ENCODE measurements at regions of chr16 and their contacts with region 1.

Region 1: GRCh38 chr16:10743610-10744393 is at the start of gene NUBP1:
- DNase-seq: peak; percentile 98 to 99
- ATAC-seq: peak; percentile 94 to 99 (median 95)
- H3K4me3 ChIP-seq: peak within 1 kb of the TSS; percentile 78
- H3K4me3 Mint-ChIP-seq: peak within 1 kb of the TSS; percentile 82
- H3K27ac ChIP-seq: peak within 1 kb of the TSS; percentile 99
- H3K27ac Mint-ChIP-seq: peak within 1 kb of the TSS; percentile 97 to 98
- H3K4me1 ChIP-seq: peaks cover 26% of the 10 kb centered on the region
- H3K4me1 Mint-ChIP-seq: peaks cover 16 to 36% of the 10 kb centered on the region in 2 donors
- H3K27me3 ChIP-seq: no peaks in the 10 kb centered on the region
- H3K27me3 Mint-ChIP-seq: no peaks in the 10 kb centered on the region
- CTCF ChIP-seq: no peak
- total RNA-seq, gene NUBP1: 19.3 to 25.6 (median 20.5) TPM

Region 2: DNA sequence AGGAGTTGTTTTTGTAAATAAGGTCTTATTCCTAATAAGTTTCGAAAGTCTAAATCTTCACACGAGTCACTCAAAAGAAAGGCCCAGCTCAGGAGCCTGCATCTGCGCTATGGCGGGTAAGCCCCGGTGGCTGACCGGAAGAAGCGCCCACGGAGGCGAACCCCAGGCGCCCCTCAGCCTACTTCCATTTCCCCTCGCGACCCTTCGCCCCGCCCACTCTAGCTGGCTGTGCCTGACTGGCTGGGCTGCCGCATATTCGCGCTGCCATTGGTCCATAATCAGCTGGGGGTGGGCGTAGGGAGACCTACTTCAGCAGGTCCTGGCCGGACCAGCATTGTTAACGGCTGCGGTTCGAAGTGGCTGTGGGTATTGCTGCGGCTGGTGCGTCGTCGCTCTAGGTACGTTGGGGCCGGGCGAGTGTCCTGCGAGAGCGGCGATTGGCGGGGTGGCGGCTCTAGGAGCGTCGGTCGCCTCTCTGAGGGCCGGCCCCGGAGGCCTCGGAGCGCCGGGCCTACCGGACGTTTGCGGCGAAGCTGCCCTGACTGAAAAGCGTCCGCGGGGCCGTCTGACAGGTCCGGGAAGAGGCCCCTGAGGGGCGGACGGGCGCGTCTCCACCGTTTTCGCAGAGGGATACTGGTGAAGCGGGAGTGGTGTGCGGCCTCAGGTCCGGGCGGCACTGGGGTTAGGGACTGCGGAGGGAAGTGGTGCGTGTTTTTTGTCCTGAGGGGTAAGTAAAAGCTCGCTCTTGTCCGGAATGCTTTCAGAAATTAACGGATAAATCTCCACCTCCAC is 357.9 kb before region 1 on chr16 and contains the start of gene ATF7IP2:
- intact Hi-C with region 1: loop called (anchors 5 kb)
- DNase-seq: peak; percentile 79 to 91
- ATAC-seq: peak; percentile 94 to 97 (median 95)
- H3K4me3 ChIP-seq: peak within 1 kb of the TSS; percentile 77
- H3K4me3 Mint-ChIP-seq: peak within 1 kb of the TSS; percentile 98
- H3K27ac ChIP-seq: peak within 1 kb of the TSS; percentile 68
- H3K27ac Mint-ChIP-seq: peak within 1 kb of the TSS; percentile 86 to 98
- H3K4me1 ChIP-seq: peaks cover 5% of the 10 kb centered on the region
- H3K4me1 Mint-ChIP-seq: peaks cover 49 to 50% of the 10 kb centered on the region in 2 donors
- H3K27me3 ChIP-seq: no peaks in the 10 kb centered on the region
- H3K27me3 Mint-ChIP-seq: no peaks in the 10 kb centered on the region
- CTCF ChIP-seq: no peak
- total RNA-seq, gene ATF7IP2: 41.7 to 53.5 (median 43.8) TPM

Region 3: GRCh38 chr16:10609402-10609774 is 134.4 kb before region 1 on chr16:
- intact Hi-C with region 1: no loop called
- DNase-seq: no peak
- ATAC-seq: no peak
- H3K4me3 ChIP-seq: no peak overlapping the region
- H3K4me3 Mint-ChIP-seq: no peak overlapping the region
- H3K27ac ChIP-seq: no peak overlapping the region
- H3K27ac Mint-ChIP-seq: no peak overlapping the region
- H3K4me1 ChIP-seq: no peaks in the 10 kb centered on the region
- H3K4me1 Mint-ChIP-seq: no peaks in the 10 kb centered on the region
- H3K27me3 ChIP-seq: no peaks in the 10 kb centered on the region
- H3K27me3 Mint-ChIP-seq: peaks cover 14 to 15% of the 10 kb centered on the region in 2 donors
- CTCF ChIP-seq: no peak

Region 4: DNA sequence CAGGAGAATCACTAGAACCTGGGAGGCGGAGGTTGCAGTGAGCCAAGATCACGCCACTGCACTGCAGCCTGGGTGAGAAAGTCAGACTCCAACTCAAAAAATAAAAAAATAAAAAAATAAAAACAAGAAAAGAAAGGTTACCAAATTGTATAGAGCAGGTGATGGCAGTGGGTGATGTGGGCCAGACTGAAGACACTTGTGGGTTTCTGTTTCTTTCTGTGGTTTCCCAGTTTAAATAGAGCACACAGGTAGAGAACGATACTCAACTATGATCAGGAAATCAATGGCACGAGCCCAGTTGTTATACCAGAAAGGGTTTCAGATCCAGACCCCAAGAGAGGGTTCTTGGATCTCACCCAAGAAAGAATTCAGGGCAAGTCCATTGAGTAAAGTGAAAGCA is 32.5 kb after region 1 on chr16:
- intact Hi-C with region 1: no loop called
- DNase-seq: peak in 1 of 2 donors; percentile 54
- ATAC-seq: peak in 2 of 3 donors; percentile 41 to 65
- H3K4me3 ChIP-seq: no peak overlapping the region
- H3K4me3 Mint-ChIP-seq: no peak overlapping the region
- H3K27ac ChIP-seq: no peak overlapping the region
- H3K27ac Mint-ChIP-seq: no peak overlapping the region
- H3K4me1 ChIP-seq: peaks cover 25% of the 10 kb centered on the region
- H3K4me1 Mint-ChIP-seq: peaks cover 3 to 18% of the 10 kb centered on the region in 2 donors
- H3K27me3 ChIP-seq: no peaks in the 10 kb centered on the region
- H3K27me3 Mint-ChIP-seq: no peaks in the 10 kb centered on the region
- CTCF ChIP-seq: no peak

Region 5: GRCh38 chr16:10944249-10945064 is 200.7 kb after region 1 on chr16 and contains the start of gene CLEC16A:
- intact Hi-C with region 1: loop called (anchors 2 kb)
- DNase-seq: peak; percentile 96
- ATAC-seq: peak; percentile 77 to 91 (median 81)
- H3K4me3 ChIP-seq: peak within 1 kb of the TSS; percentile 90
- H3K4me3 Mint-ChIP-seq: peak within 1 kb of the TSS; percentile 88
- H3K27ac ChIP-seq: peak within 1 kb of the TSS; percentile 50
- H3K27ac Mint-ChIP-seq: peak within 1 kb of the TSS; percentile 65 to 93
- H3K4me1 ChIP-seq: peaks cover 54% of the 10 kb centered on the region
- H3K4me1 Mint-ChIP-seq: peaks cover 56 to 67% of the 10 kb centered on the region in 2 donors
- H3K27me3 ChIP-seq: no peaks in the 10 kb centered on the region
- H3K27me3 Mint-ChIP-seq: no peaks in the 10 kb centered on the region
- CTCF ChIP-seq: no peak
- total RNA-seq, gene CLEC16A: 35.9 to 50.5 (median 37.4) TPM